ENCODE measurements at regions of chr13 and their contacts with region 1.

Region 1: DNA sequence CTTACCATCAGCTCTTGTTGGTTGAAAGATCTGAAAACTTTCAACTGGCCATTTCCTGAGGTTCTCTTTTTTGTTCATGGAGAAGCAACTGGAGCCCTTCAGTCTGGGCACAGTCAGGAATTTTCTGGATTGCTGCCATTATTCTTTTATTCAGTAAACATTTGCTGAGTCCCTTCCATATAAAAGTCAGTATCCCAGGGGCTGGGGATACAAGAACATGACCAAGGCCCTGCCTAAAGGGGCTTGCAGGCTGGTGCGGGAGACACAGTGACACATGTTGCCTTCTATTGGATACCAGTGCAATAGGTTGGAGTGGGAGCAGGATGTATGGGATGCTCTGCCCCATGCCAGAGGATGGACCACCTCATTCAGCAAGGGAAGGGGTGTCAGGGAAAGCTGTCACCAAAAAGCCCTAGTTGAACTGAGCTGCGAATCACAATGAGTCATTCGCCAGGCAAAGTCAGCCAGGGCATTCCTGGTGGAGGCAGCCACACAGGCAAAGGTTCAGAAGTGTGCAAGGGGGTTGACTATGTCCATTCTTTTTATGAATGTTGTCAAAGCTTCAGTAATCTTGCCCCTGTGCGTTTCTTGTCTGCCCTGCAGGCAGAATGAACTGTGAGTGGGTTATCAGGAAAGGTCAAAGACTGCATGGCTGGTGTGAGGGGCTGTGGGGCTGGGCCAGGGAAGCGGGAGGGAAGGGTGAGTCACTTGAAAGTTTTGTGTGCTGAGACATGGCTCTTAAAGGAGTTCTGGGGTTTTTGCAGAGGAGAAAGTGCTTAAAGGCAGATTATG is 395.9 kb downstream of the KCNRG start:
- DNase-seq: peak in 1 of 5 donors; percentile 59
- ATAC-seq: peak; percentile 12 to 87 (median 67)
- H3K4me3 ChIP-seq: no peak overlapping the region
- H3K27ac ChIP-seq: peak overlapping the region in 6 of 12 donors; percentile 4 to 48 (median 42)
- H3K4me1 ChIP-seq: peaks cover 0 to 17% (median 7%) of the 10 kb centered on the region in 12 donors
- H3K27me3 ChIP-seq: no peaks in the 10 kb centered on the region
- CTCF ChIP-seq: no peak
- POLR2A ChIP-seq: no peak

Region 2: DNA sequence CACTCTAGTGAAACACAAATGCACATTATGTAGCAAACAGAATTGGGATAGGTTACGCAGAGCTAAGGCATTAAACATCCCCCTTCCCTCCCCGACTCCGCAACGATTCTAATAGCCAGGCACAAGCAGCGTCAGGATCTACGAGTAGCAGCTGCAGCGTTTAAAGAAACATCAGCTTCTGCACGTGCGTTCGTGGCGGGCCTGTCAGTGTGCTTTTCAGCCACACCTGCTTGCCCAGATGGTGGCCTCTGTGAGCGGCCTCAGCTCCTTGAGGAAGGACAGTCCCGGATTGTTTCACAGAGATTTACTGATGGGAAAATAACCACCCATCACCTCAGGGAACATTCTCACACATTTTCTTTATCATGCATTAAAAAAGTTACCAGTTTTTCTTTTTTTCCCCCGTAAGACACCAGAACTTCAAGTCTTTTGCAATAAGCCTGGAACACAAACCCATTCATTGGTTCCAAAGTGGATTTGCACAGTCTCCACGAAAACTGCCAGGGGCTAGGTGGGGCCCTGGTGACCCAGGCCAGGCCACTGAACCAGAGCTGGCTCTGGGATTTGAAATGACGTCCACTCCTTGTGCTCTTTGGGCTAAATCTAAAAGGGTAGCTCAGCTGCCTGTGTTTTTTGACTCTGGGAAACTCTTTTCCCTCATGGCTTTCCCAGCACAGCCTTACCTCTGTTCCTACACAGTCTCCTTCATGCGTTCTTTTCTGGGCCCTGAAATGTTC is 70.4 kb before region 1 on chr13:
- intact Hi-C with region 1: loop called in 1 of 10 experiments (anchors 2 kb)
- DNase-seq: peak in 1 of 5 donors; percentile 54
- ATAC-seq: peak in 1 of 4 donors; percentile 24
- H3K4me3 ChIP-seq: no peak overlapping the region
- H3K27ac ChIP-seq: no peak overlapping the region
- H3K4me1 ChIP-seq: peaks cover 0 to 10% (median 0%) of the 10 kb centered on the region in 12 donors
- H3K27me3 ChIP-seq: no peaks in the 10 kb centered on the region
- CTCF ChIP-seq: no peak
- POLR2A ChIP-seq: no peak

Region 3: DNA sequence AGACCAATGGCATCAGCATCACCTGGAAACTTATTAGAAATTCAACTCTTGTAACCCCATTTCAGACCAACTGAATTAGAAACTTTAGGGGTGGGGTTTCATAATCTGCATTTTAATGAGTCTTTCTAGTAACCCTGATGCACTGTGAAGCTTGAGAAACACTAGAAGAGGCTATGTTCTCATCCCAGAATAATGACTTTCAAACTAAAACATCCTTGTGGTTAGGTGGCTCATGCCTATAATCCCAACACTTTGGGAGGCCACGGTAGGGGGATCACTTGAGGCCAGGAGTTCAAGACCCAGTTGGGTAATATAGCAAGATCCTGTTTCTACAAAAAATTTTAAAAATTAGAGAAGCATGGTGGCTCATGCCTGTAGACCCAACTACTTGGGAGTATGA is 30.0 kb after region 1 on chr13:
- intact Hi-C with region 1: no loop called
- DNase-seq: no peak
- ATAC-seq: no peak
- H3K4me3 ChIP-seq: no peak overlapping the region
- H3K27ac ChIP-seq: no peak overlapping the region
- H3K4me1 ChIP-seq: peaks cover 0 to 5% (median 0%) of the 10 kb centered on the region in 12 donors
- H3K27me3 ChIP-seq: no peaks in the 10 kb centered on the region
- CTCF ChIP-seq: no peak
- POLR2A ChIP-seq: no peak

Measured in heart left ventricle (tissue), 16 donors.